ENCODE measurements at regions of chr3 and their contacts with region 1.

Region 1: DNA sequence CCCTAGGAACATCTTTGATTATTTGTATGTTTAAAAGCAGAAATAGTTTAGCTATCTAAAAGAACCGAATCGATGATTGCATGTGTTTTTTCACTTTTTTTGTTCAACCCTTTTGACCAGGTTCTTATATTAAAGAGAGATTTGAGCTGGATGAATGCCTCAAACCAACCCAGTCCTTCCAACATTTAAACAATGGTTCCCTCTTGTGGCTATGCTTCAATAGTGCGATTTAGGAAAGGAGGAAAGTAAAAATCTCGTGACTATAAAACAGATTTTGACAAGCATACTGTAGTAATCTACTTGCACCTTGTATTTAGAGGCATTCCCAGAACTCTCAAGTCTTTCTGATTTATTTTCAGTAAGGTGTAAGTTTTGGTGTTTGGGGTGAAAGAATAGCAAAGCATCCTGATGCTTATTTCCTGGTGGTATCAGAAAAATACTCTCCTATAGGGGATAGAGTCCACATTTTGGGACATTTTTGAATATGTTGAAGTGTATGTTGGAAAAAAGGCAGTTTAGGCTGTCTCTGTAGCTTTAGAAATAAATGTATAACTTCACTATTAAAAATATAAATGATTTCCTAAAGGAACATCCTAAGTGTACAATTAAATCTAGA is 159.6 kb upstream of the KCNH8 start:
- DNase-seq: no peak
- H3K4me3 Mint-ChIP-seq: peak overlapping the region; percentile 85
- H3K27ac Mint-ChIP-seq: peak overlapping the region; percentile 46
- H3K4me1 Mint-ChIP-seq: peaks cover 25% of the 10 kb centered on the region
- H3K27me3 Mint-ChIP-seq: peaks cover 12% of the 10 kb centered on the region

Region 2: GRCh38 chr3:17742108-17742879 is 1246.4 kb before region 1 on chr3 and contains the start of gene TBC1D5:
- intact Hi-C with region 1: loop called (anchors 5 kb)
- DNase-seq: peak; percentile 90
- H3K4me3 Mint-ChIP-seq: peak within 1 kb of the TSS; percentile 92
- H3K27ac Mint-ChIP-seq: peak within 1 kb of the TSS; percentile 97
- H3K4me1 Mint-ChIP-seq: peaks cover 56% of the 10 kb centered on the region
- H3K27me3 Mint-ChIP-seq: peaks cover 2% of the 10 kb centered on the region
- total RNA-seq, gene TBC1D5: 31.4 and 33.8 TPM in 2 replicates

Region 3: GRCh38 chr3:18389108-18389733 is 599.5 kb before region 1 on chr3:
- intact Hi-C with region 1: loop called (anchors 5 kb)
- DNase-seq: no peak
- H3K4me3 Mint-ChIP-seq: no peak overlapping the region
- H3K27ac Mint-ChIP-seq: no peak overlapping the region
- H3K4me1 Mint-ChIP-seq: peaks cover 81% of the 10 kb centered on the region
- H3K27me3 Mint-ChIP-seq: no peaks in the 10 kb centered on the region

Region 4: GRCh38 chr3:18559331-18559842 is 429.3 kb before region 1 on chr3:
- intact Hi-C with region 1: loop called (anchors 2 kb)
- DNase-seq: peak; percentile 27
- H3K4me3 Mint-ChIP-seq: peak overlapping the region; percentile 64
- H3K27ac Mint-ChIP-seq: peak overlapping the region; percentile 90
- H3K4me1 Mint-ChIP-seq: peaks cover 66% of the 10 kb centered on the region
- H3K27me3 Mint-ChIP-seq: no peaks in the 10 kb centered on the region

Region 5: DNA sequence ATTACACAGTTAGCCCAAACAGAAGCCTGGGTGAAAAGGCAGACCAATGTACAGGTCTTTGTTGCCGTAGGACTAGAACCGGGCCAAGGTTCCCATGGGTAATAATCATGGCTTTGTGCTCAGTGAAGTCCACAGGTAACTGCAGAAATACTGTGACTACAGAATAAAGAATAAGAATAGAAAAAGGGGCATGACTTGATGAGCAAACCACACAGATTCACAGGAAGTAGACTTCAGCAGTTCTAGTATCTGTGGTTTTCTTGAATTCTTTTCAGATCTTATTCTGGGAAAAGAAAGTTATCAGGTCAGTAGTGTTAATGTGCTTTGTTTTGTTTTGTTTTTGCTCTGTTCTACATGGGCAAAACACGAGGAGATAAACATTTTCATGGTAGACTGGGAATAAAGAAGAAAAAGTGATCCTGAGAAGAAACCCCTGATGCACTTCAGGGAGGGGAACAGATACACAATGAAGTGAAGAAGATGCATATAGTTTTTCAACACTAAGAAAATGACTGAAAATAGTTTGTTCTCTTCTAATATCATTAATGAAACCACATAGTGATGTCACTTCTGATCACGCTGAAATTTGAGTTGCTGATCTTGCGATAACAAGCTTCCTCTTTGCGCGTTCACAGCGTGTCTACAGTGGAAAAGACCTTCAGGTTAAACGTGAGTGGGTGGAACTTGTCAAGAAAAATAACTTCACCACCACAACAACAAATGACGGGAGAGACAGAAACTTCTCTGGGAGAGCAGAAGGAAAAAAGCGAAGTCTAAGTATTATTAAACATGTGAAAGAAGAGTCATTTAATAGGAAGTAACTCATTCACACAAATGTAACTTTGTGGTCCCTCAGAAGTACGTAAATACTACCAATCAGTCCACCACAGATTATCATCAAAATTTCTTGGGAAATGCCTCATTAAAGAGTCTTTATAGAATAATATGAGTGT is 247.8 kb before region 1 on chr3:
- intact Hi-C with region 1: loop called (anchors 1 kb)
- DNase-seq: peak; percentile 62
- H3K4me3 Mint-ChIP-seq: peak overlapping the region; percentile 50
- H3K27ac Mint-ChIP-seq: peak overlapping the region; percentile 90
- H3K4me1 Mint-ChIP-seq: peaks cover 92% of the 10 kb centered on the region
- H3K27me3 Mint-ChIP-seq: no peaks in the 10 kb centered on the region

Region 6: DNA sequence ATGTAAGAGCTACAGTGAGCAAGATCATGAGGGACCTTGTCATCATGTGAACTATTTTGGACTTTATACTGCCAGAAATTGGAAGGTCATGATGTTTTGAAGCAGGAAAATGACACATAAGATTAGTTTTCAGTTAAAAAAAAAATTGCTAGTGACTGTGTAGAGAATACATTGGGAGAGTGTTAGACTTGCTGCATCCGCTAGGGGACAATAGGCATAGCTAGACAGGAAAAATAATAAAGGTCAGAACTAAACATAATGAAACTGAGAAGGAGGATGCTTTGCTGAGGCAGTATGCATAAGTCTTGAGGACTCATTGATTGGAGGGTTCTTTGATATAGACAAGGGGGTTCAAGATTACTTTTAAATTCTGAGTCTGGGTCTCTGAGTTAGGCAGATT is 116.3 kb before region 1 on chr3:
- intact Hi-C with region 1: loop called (anchors 1 kb)
- DNase-seq: no peak
- H3K4me3 Mint-ChIP-seq: no peak overlapping the region
- H3K27ac Mint-ChIP-seq: no peak overlapping the region
- H3K4me1 Mint-ChIP-seq: peaks cover 30% of the 10 kb centered on the region
- H3K27me3 Mint-ChIP-seq: no peaks in the 10 kb centered on the region